ENCODE measurements at regions of chr2 and their contacts with region 1.

Region 1: DNA sequence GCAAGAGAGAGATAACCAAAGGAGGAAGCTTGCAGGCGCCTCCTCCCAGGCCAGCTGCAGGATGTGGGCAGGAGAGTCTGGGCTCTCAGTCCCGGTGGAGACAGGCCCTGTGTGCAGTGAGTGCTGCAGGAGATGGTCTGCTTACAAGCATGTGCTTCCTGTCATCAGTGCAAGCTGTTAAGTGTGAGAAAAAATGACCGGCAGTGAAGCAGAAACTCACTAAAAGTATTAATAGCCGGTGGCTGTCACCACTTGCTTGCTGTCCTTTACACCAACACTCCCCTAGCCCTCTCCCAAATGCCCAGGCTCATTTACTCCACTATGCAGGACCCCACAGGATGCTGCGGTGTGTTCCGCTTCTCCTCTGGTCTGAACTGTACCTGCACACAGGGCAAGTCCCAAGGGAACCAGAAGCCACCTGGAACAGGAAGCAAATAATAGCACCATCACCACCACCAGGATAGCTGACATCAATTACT is 435.6 kb upstream of the HS6ST1 start:
- DNase-seq: peak; percentile 70
- ATAC-seq: peak; percentile 83
- H3K4me3 ChIP-seq: peak overlapping the region in 1 of 5 experiments; percentile 23
- H3K4me3 Mint-ChIP-seq: peak overlapping the region; percentile 67
- H3K27ac ChIP-seq: peak overlapping the region; percentile 46 to 59
- H3K27ac Mint-ChIP-seq: peak overlapping the region; percentile 80
- H3K4me1 ChIP-seq: peaks cover 46 to 64% of the 10 kb centered on the region in 2 donors
- H3K4me1 Mint-ChIP-seq: peaks cover 57% of the 10 kb centered on the region
- H3K27me3 ChIP-seq: no peaks in the 10 kb centered on the region
- H3K27me3 Mint-ChIP-seq: no peaks in the 10 kb centered on the region
- CTCF ChIP-seq: no peak

Region 2: DNA sequence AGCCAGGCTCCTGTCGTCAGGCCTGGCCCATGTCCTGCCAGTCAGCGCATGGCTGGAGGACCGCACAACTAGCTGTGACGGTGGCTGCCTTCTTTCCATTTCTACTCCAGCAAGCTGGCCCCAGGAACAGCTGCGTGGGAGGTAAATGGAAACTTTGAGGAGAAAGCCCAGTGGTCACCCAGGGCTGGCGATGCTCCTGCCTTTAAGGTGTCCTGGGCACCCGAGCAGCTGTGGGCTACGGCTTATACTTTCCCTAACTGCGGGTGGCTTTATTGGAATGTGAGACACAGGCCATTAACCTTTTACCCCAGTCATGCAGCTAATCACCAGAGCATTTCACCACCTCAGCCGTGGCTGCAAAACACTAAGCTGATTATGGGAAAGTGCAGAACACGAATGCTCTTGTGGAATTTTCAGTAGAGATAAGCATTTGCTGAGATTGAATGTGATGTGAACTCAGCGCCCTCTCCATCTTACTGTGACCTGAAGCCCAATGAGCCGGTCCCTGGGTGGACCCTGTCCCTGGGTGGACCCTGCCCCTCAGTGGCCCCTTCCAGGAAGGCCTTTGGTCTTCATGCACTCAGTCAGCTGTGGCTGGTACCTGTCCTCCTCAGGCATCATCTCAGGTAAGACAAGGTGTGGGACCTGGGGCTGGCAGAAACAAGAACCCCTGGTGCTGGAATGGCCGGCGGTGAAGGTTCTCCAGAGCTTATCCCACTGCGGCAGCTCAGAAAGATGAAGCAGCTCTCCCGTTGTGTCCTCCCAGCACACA is 160.2 kb before region 1 on chr2:
- CTCF ChIA-PET with region 1: no interaction called
- POLR2A ChIA-PET with region 1: no interaction called
- intact Hi-C with region 1: no loop called
- DNase-seq: no peak
- ATAC-seq: no peak
- H3K4me3 ChIP-seq: no peak overlapping the region
- H3K4me3 Mint-ChIP-seq: no peak overlapping the region
- H3K27ac ChIP-seq: no peak overlapping the region
- H3K27ac Mint-ChIP-seq: no peak overlapping the region
- H3K4me1 ChIP-seq: no peaks in the 10 kb centered on the region
- H3K4me1 Mint-ChIP-seq: no peaks in the 10 kb centered on the region
- H3K27me3 ChIP-seq: no peaks in the 10 kb centered on the region
- H3K27me3 Mint-ChIP-seq: peaks cover 14% of the 10 kb centered on the region
- CTCF ChIP-seq: no peak

Region 3: GRCh38 chr2:128736689-128737545 is 17.4 kb before region 1 on chr2:
- CTCF ChIA-PET with region 1: interaction called, 18 read pairs
- POLR2A ChIA-PET with region 1: no interaction called
- intact Hi-C with region 1: loop called (anchors 1 kb)
- DNase-seq: peak; percentile 79
- ATAC-seq: peak; percentile 75
- H3K4me3 ChIP-seq: peak overlapping the region in 4 of 5 experiments; percentile 26 to 50 (median 38)
- H3K4me3 Mint-ChIP-seq: peak overlapping the region; percentile 79
- H3K27ac ChIP-seq: no peak overlapping the region
- H3K27ac Mint-ChIP-seq: no peak overlapping the region
- H3K4me1 ChIP-seq: peaks cover 19 to 29% of the 10 kb centered on the region in 2 donors
- H3K4me1 Mint-ChIP-seq: peaks cover 20% of the 10 kb centered on the region
- H3K27me3 ChIP-seq: peaks cover 0 to 22% (median 4%) of the 10 kb centered on the region in 4 experiments
- H3K27me3 Mint-ChIP-seq: peaks cover 12% of the 10 kb centered on the region
- CTCF ChIP-seq: peak; percentile 99

Measured in B cell (primary cell).